ENCODE measurements at regions of chr4 and their contacts with region 1.

Region 1: DNA sequence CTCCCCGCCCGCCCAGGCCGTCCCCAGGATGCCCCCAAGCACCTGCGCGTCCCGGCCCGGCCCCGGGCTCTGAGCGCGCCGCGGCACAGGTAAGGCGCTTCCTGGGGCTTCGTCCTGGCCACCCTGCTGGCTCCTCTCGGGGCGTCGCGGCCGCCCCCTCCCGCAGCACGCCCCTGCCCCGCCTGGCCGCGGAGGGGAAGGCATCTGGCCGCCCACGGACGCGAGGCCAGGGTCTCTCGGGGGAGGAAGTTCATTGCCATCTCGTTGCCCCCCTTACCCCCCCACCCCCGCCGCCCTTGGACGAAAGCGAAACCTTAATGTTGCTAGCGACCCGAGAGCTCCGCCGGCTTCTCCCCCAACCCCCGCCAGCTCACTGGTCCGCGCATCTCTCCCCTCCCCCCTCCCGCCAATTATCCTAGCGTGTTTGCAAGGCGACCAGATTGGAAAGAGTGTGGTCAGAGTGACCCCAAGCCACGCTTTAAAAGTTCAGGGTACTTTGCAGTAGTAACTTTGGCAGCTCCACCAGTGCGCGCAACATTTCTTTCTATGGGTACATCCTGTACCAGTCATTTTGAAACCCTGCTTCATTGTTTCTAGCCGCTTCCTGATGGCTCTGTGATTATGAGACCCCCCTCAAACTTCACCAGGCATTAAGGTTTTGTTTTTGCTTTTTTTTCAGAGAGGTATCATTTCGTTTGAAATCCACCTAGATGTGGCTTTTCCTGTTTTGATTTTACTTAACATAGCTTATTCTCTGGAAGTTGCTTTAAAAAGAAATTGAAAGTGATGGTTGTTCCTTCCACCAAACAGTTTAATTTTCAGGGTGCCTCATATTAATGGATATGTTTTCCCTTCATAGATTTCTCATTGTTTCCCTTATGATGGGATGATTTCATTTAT is 626 bp downstream of the TBC1D1 start:
- DNase-seq: peak; percentile 33 to 71
- ATAC-seq: peak; percentile 44 to 54
- H3K4me3 ChIP-seq: peak overlapping the region; percentile 85 to 95 (median 88)
- H3K27ac ChIP-seq: peak overlapping the region; percentile 94 to 99 (median 96)
- H3K4me1 ChIP-seq: peaks cover 21 to 26% of the 10 kb centered on the region in 2 donors
- H3K27me3 ChIP-seq: no peaks in the 10 kb centered on the region
- CTCF ChIP-seq: peak in 1 of 5 experiments; percentile 15
- POLR2A ChIP-seq: peak in 1 of 2 donors; percentile 16

Region 2: GRCh38 chr4:37510626-37511025 is 380.9 kb before region 1 on chr4:
- in situ Hi-C with region 1: no loop called
- intact Hi-C with region 1: no loop called
- DNase-seq: no peak
- ATAC-seq: no peak
- H3K4me3 ChIP-seq: no peak overlapping the region
- H3K27ac ChIP-seq: no peak overlapping the region
- H3K4me1 ChIP-seq: no peaks in the 10 kb centered on the region
- H3K27me3 ChIP-seq: no peaks in the 10 kb centered on the region
- CTCF ChIP-seq: no peak
- POLR2A ChIP-seq: no peak

Region 3: DNA sequence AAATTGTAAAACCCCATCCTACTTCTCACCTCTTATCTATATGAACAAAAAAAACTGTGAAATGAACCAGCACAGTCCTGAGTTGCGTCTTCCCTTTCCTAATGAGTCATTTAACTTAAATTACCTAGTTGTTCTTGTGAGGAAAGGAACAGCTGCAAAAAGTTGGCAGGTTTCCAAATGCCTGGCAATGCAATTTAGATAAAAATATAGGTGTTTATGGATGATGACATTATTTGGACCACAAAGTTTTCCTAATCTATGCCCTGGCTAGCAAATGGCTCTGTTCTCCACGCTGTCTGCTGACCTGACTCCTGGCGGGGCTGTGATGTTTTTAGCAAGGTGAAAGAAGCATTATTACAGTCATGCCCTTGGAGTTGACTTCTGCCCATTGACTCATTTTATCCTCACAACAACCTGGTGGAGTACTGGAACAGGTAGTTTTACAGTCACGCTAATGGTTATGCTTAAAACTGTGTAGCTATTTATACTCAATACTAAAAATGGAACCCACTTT is 175.6 kb before region 1 on chr4:
- in situ Hi-C with region 1: no loop called
- intact Hi-C with region 1: loop called (anchors 1 kb)
- DNase-seq: peak; percentile 83 to 89
- ATAC-seq: peak; percentile 97 to 98
- H3K4me3 ChIP-seq: no peak overlapping the region
- H3K27ac ChIP-seq: peak overlapping the region; percentile 68 to 83 (median 80)
- H3K4me1 ChIP-seq: peaks cover 10 to 13% of the 10 kb centered on the region in 2 donors
- H3K27me3 ChIP-seq: no peaks in the 10 kb centered on the region
- CTCF ChIP-seq: no peak
- POLR2A ChIP-seq: peak in 1 of 2 donors; percentile 29

Region 4: DNA sequence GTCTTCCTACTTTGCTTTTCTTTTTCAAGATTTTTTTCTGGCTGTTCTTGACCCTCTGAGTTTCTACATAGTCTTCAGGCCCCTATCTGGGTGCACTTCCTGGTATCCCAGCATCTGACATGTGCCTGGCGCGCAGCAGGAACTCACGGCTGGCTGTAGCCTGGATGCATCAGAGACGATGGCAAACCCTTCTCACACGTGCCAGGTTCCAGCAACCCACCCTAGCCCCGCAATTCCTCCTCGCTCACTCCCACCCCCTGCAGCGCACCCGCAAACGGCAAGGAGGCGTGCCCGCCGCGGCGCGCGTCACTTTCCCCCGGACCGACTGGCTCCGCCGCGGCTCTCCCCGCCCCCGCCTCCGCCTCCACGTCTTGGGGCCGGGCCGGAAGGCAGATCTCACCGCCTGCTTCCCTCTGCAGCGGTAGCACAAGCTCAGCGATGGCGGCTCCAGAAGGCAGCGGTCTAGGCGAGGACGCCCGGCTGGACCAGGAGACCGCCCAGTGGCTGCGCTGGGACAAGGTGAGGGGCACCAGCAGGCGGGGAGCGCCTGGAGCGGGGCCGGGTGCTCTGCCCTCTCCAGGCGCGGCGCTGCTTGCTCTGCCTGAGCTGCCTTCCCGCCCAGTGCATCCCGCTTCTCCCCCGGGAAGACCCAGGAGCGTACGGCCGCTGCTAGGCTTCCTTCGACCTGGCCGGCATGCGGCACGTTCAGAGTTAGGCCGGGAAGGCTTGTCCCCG is 65.0 kb before region 1 on chr4 and contains the start of gene PGM2:
- in situ Hi-C with region 1: no loop called
- intact Hi-C with region 1: loop called (anchors 2 kb)
- DNase-seq: peak; percentile 59 to 62
- ATAC-seq: peak; percentile 89 to 90
- H3K4me3 ChIP-seq: peak within 1 kb of the TSS; percentile 67 to 88 (median 78)
- H3K27ac ChIP-seq: peak within 1 kb of the TSS; percentile 60 to 76 (median 74)
- H3K4me1 ChIP-seq: peaks cover 10 to 11% of the 10 kb centered on the region in 2 donors
- H3K27me3 ChIP-seq: no peaks in the 10 kb centered on the region
- CTCF ChIP-seq: peak in 1 of 5 experiments; percentile 40
- POLR2A ChIP-seq: peak; percentile 55 to 76
- total RNA-seq, gene PGM2: 0.92 to 3.7 (median 2.1) TPM

Region 5: DNA sequence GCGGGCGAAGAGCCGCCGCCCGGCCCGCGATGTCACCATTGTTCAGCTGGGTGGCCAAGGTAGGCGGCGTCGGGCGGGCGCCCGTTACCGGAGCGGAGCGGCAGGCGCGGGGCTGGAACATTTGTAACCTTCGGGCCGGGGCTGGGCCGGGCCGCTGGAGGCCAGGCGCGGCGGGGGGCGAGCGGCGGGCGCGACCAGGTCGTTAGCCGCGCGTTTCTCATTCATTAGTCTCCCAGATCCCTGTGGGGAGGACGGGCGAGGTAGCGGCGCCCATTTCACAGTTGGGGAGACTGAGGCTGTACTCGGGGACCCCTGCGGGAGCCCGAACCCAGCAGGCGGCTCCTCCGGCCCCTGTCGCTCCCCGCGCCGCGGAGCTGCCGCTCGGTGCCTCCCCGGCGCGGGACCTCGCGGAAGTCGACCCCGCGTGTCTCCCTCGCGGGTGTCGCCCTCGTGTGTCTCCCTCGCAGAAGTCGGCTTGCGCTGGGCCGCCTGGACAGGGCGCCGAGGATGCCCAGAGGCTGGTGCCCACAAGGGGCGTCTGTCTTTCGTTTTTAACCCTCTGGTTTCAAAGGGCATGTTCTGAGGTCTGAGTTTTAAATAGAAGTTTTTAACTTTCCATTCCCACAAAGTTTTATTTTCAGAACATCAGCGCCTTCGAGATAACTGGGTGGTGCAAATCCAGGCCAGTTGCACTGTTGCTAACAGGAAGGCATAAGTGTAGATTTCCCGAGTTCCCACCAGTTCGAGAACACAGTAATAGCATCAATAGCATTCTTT is 86.1 kb after region 1 on chr4:
- in situ Hi-C with region 1: loop called in 1 of 4 experiments (anchors 10 kb)
- intact Hi-C with region 1: loop called (anchors 1 kb)
- DNase-seq: peak; percentile 47 to 68
- ATAC-seq: peak; percentile 76 to 89
- H3K4me3 ChIP-seq: peak overlapping the region; percentile 63 to 83 (median 64)
- H3K27ac ChIP-seq: peak overlapping the region; percentile 79 to 92 (median 85)
- H3K4me1 ChIP-seq: peaks cover 24 to 30% of the 10 kb centered on the region in 2 donors
- H3K27me3 ChIP-seq: no peaks in the 10 kb centered on the region
- CTCF ChIP-seq: peak; percentile 62 to 86 (median 78)
- POLR2A ChIP-seq: peak; percentile 25 to 54

Region 6: DNA sequence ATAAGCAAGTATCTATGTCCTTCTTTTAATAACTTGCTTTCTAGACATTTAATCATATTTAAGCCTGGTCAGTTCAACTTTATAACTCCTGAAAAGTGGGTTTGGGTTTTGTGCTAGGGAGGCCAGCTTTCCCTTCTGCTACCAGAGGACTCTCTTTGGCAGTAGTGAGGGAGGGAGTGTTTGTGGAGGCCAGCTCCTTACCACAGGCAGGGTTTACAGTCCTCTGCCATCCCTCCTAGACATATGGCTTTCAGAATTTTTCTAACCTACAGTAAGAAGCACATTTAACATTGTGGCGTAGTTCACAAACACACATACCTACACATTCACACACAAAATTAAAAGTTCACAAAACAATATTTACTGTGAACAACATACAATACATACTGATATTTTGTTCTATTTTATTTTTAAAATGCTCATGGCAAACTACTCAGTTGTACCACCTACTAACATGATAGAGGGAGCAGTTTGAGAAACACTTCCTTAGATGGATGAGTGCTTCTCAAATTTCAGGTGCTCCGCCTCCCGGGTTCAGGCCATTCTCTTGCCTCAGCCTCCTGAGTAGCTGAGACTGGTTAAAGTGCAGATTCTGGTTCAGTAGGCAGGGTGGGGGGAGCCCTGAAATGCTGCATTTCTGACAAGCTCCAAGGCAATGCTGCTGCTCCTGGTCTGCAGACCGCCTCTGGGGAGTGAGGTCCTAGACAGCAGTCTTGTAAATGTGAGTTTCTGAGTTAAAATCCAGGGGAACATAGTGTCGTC is 155.4 kb after region 1 on chr4:
- in situ Hi-C with region 1: no loop called
- intact Hi-C with region 1: no loop called
- DNase-seq: no peak
- ATAC-seq: no peak
- H3K4me3 ChIP-seq: no peak overlapping the region
- H3K27ac ChIP-seq: no peak overlapping the region
- H3K4me1 ChIP-seq: no peaks in the 10 kb centered on the region
- H3K27me3 ChIP-seq: no peaks in the 10 kb centered on the region
- CTCF ChIP-seq: no peak
- POLR2A ChIP-seq: no peak

Region 7: DNA sequence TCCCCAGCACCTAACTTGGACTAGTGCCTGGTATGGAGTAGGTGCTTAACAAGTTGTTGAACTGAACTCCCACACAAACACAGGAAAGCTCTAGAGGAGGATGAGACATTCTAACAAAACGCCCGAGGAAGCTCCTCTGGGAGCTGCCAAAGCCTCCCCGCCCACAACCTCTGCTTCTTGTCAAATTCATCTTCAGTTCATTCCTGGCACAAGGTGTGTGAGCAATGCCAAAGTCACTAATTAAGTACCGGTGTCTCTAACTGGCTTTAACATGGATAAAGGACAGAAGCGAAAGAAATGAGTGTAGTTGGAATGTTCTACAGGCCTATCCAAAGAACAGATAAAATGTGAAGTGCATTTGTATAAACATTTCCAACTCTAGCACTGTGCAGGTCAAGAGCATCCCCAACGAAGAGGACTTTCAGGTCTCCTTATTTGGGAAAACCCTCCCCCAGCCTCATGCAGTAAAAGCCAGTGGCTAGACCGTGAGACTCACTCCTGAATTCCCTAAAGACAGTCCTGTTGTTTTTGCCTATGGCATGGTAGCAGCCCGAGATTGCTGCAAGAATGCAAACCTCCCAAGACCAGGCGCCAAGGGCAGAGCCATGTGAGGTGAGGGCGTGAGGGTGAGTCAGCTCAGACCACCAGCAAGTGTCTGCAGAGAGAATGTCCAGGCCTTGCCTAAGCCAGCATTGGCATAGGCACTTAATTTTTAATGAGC is 700.3 kb after region 1 on chr4:
- in situ Hi-C with region 1: no loop called
- intact Hi-C with region 1: no loop called
- DNase-seq: no peak
- ATAC-seq: no peak
- H3K4me3 ChIP-seq: no peak overlapping the region
- H3K27ac ChIP-seq: no peak overlapping the region
- H3K4me1 ChIP-seq: no peaks in the 10 kb centered on the region
- H3K27me3 ChIP-seq: no peaks in the 10 kb centered on the region
- CTCF ChIP-seq: no peak
- POLR2A ChIP-seq: no peak

Region 8: DNA sequence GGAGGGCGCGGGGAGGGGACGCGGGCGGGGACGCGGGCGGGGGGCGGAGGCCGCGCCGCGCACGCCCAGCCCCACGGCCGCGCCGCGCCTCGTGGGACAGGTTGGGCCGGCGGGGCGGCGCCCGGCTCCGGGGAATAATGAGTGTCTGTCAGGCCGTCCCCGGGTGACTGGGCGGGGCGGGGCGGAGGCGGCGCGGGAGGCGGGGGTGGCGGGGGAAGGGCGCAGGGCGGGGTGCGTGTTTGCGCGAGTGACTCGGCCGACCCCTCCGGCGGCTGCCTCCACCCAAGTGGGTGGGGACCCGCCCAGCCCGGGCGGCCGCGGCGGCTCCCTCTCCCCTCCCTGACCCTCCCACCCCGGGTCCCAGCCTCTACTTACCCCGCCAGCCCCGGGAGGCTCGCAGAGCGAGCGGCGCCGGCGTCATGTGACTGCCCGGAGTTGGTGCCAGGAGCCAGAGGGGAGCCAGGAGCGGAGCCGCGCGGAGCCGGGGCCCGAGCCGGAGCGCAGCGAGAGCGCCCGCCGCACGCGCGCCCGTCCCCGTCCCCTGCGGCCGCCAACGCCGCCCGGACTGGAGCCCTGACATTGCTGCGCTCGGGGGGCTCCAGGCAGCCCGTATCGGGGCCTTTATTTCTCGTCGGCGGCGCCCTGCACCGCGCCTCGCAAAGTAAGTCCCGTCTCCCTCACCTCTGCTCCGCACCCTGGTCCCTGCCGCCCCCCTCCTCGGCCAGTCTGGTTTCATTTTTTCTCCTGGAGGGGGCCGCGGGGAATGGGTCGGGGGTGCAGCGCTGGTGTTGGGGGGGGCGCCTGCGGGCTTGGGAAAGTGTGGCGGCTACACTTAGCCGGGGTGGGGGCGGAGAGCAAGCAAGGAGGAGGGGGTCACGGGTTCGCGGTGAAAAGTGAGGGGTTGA is 772.5 kb after region 1 on chr4 and contains the start of gene KLF3:
- in situ Hi-C with region 1: no loop called
- intact Hi-C with region 1: loop called (anchors 2 kb)
- DNase-seq: peak; percentile 88 to 92
- ATAC-seq: peak; percentile 65 to 70
- H3K4me3 ChIP-seq: peak within 1 kb of the TSS; percentile 94 to 99 (median 98)
- H3K27ac ChIP-seq: peak within 1 kb of the TSS; percentile 97 to 100 (median 98)
- H3K4me1 ChIP-seq: peaks cover 38 to 44% of the 10 kb centered on the region in 2 donors
- H3K27me3 ChIP-seq: no peaks in the 10 kb centered on the region
- CTCF ChIP-seq: no peak
- POLR2A ChIP-seq: peak; percentile 93 to 95
- total RNA-seq, gene KLF3: 12.7 to 26.5 (median 19.4) TPM

Measured in gastrocnemius medialis (tissue), 4 donors.